ENCODE measurements at regions of chr14 and their contacts with region 1.

Region 1: GRCh38 chr14:93137864-93138263 is 22.1 kb upstream of the ITPK1 start:
- DNase-seq: peak; percentile 87
- ATAC-seq: peak; percentile 96

Region 2: GRCh38 chr14:92951912-92952471 is 185.9 kb before region 1 on chr14:
- intact Hi-C with region 1: loop called (anchors 5 to 10 kb)
- DNase-seq: peak; percentile 63 to 87
- ATAC-seq: peak; percentile 87

Region 3: GRCh38 chr14:93059917-93060545 is 77.8 kb before region 1 on chr14:
- intact Hi-C with region 1: no loop called
- DNase-seq: no peak
- ATAC-seq: no peak

Region 4: DNA sequence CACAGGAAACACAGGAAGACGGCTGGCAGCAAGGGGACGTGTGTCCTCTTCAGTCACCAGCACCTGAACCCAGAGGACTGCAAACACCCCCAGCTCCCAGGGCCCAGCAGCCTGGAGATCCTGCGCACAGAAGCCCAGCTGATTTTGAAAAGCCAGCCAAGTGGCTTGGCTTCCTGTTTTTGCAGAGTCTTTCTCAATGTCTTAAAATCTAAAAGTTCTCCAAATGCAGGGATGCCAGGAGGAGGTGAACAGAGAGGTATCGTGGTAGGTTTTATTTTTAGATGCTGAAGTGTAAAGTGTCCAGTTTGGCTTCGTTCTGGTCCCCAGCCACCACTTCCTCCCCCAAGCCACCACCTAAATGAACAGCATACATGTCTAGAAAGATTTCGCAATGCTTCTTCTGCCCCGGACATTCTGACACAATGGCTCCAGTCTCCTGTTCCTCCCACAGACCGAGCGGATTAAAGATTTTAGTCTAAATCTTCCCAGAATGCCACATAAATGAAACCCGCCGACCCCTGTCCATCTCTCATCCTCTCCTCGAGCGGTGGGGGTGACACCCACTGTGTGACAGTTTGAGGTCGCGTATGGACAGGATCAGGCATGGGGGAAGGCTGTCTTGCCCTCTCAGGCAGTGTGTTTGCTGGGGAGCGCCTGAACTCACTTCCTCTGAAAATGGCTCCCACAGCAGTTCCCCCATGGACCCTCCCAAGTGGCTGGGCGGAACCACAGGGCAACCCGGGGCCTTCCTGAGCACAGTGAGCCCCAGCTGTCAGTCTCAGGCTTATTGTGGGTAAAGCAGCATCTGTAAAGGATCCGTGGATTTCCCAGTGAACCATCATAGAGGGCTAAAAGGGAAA is 63.7 kb before region 1 on chr14:
- intact Hi-C with region 1: no loop called
- DNase-seq: no peak
- ATAC-seq: peak; percentile 9

Measured in left colon (tissue), 2 donors.